Naive thymus-derived CD4-positive, alpha-beta T cell (primary cell): ENCODE measurements at regions of chr14 and their contacts with region 1.

Region 1: GRCh38 chr14:94136575-94137331 is 7.3 kb upstream of the IFI27L2 start:
- DNase-seq: peak; percentile 59 to 84 (median 73)
- ATAC-seq: peak; percentile 96
- H3K4me3 ChIP-seq: no peak overlapping the region
- H3K4me3 Mint-ChIP-seq: no peak overlapping the region
- H3K27ac ChIP-seq: no peak overlapping the region
- H3K27ac Mint-ChIP-seq: no peak overlapping the region
- H3K4me1 ChIP-seq: no peaks in the 10 kb centered on the region
- H3K4me1 Mint-ChIP-seq: peaks cover 0 to 12% (median 0%) of the 10 kb centered on the region in 7 donors
- H3K27me3 ChIP-seq: no peaks in the 10 kb centered on the region
- H3K27me3 Mint-ChIP-seq: peaks cover 0 to 34% (median 4%) of the 10 kb centered on the region in 5 donors

Region 2: DNA sequence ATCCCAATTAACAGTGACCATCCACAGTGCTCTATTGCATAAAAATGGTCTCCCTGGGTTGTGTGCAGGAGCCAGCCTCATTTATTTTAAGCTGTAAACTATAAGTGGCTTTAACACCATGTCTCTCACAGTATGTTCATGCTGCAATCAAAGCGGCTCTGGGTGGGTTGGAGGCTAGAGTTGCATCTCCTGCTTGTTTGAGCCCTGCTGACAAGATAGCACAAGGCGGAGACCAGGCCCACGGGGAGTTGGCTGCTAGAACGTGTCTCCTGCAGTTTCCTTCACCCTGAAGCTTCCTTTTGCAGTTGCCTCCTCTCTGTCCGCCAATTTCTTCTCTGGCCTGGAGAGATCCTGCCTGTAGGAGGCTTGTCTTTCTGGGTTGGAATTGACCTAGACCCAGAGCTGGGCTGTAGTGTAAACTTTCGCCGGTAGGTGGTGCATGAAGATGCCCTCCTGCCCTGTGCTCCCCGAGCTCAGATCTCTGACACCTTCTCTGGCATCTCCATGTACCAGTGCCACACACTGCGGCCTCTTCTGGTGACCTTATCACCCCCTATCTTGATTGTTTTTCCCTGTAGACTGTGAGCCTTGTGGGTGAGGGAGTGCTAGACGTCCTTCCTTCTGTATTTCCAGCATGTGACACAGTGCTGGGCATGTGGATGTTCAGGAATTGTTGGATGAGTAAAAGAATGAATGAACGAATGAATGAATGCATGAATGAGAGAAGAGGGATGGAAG is 100.3 kb before region 1 on chr14:
- CTCF ChIA-PET with region 1: interaction called, 48 read pairs
- POLR2A ChIA-PET with region 1: interaction called, 3 read pairs
- intact Hi-C with region 1: loop called (anchors 1 kb)
- DNase-seq: peak; percentile 40 to 77 (median 64)
- ATAC-seq: peak; percentile 90
- H3K4me3 ChIP-seq: no peak overlapping the region
- H3K4me3 Mint-ChIP-seq: no peak overlapping the region
- H3K27ac ChIP-seq: no peak overlapping the region
- H3K27ac Mint-ChIP-seq: peak overlapping the region in 2 of 9 donors; percentile 8 to 78
- H3K4me1 ChIP-seq: no peaks in the 10 kb centered on the region
- H3K4me1 Mint-ChIP-seq: peaks cover 3 to 8% (median 4%) of the 10 kb centered on the region in 7 donors
- H3K27me3 ChIP-seq: no peaks in the 10 kb centered on the region
- H3K27me3 Mint-ChIP-seq: no peaks in the 10 kb centered on the region

Region 3: DNA sequence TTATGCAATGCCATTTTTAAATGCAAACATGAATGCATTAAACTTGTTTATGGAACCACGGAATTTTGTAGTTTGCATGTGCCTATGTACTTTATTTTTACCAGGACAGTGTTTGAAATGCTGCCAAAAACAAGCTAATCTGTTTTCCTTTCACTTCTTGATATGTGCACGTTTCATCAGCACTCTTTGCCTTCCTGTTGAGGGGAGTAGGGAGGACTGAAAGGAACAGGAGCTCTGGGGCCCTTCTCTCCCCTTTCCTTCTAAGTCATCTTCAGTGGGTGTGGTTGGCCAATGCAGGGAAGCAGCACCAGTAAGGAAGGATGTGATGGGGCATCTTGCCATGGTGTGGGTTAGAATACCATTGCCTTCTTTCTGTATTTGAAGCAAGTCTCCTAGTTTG is 25.2 kb after region 1 on chr14:
- CTCF ChIA-PET with region 1: interaction called, 14 read pairs
- POLR2A ChIA-PET with region 1: interaction called, 3 read pairs
- intact Hi-C with region 1: loop called in 1 of 2 experiments (anchors 2 kb)
- DNase-seq: no peak
- ATAC-seq: no peak
- H3K4me3 ChIP-seq: no peak overlapping the region
- H3K4me3 Mint-ChIP-seq: peak overlapping the region in 5 of 10 donors; percentile 2 to 50 (median 12)
- H3K27ac ChIP-seq: no peak overlapping the region
- H3K27ac Mint-ChIP-seq: peak overlapping the region in 8 of 9 donors; percentile 30 to 75 (median 67)
- H3K4me1 ChIP-seq: peaks cover 12 to 47% of the 10 kb centered on the region in 2 donors
- H3K4me1 Mint-ChIP-seq: peaks cover 24 to 74% (median 62%) of the 10 kb centered on the region in 7 donors
- H3K27me3 ChIP-seq: no peaks in the 10 kb centered on the region
- H3K27me3 Mint-ChIP-seq: peaks cover 0 to 3% (median 0%) of the 10 kb centered on the region in 5 donors

Region 4: DNA sequence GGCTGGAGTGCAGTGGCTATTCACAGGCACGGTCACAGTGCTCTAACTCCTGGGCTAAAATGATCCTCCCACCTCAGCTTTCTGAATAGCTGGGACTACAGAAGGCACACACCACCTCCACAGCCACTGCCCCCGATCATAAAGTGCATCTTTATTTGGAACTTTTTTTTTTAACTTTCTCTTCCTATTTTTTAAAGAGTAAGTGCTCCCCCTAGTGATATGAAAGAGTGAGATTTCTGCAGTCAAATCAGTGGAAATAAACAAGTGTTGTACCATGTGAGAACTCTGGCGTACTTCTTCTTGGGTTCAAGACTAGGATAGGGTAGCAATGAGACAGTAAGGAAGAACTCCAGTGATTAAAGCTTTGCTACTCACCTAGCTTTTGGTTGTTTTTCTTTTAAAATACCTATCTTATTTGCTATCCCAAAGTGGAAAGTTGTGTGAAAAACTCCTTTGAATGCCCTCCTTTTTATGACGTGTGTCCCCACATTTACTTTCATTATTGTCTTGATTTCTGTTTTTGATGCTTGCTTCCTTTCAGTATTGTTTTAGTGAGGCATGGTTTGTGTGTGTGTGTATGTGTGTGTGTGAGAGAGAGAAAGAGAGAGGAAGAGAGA is 44.0 kb after region 1 on chr14:
- CTCF ChIA-PET with region 1: interaction called, 90 read pairs
- POLR2A ChIA-PET with region 1: interaction called, 13 read pairs
- intact Hi-C with region 1: loop called (anchors 1 kb)
- DNase-seq: peak in 7 of 9 donors; percentile 57 to 81 (median 71)
- ATAC-seq: peak; percentile 93
- H3K4me3 ChIP-seq: peak overlapping the region; percentile 5
- H3K4me3 Mint-ChIP-seq: peak overlapping the region in 8 of 10 donors; percentile 6 to 75 (median 50)
- H3K27ac ChIP-seq: peak overlapping the region; percentile 56
- H3K27ac Mint-ChIP-seq: peak overlapping the region in 8 of 9 donors; percentile 16 to 90 (median 74)
- H3K4me1 ChIP-seq: peaks cover 0 to 1% of the 10 kb centered on the region in 2 donors
- H3K4me1 Mint-ChIP-seq: peaks cover 10 to 23% (median 18%) of the 10 kb centered on the region in 7 donors
- H3K27me3 ChIP-seq: no peaks in the 10 kb centered on the region
- H3K27me3 Mint-ChIP-seq: peaks cover 0 to 36% (median 0%) of the 10 kb centered on the region in 5 donors